H1 (cell line): ENCODE measurements at regions of chr3 and their contacts with region 1.

Region 1: GRCh38 chr3:57179580-57180410 is 14.6 kb upstream of the IL17RD start:
- DNase-seq: no peak
- H3K4me3 ChIP-seq: no peak overlapping the region
- H3K27ac ChIP-seq: no peak overlapping the region
- H3K4me1 ChIP-seq: no peaks in the 10 kb centered on the region
- H3K27me3 ChIP-seq: no peaks in the 10 kb centered on the region
- CTCF ChIP-seq: peak in 2 of 3 experiments; percentile 61 to 70; a peak in 3 of 4 replicates
- EP300 ChIP-seq: no peak
- POLR2A ChIP-seq: no peak
- RAD21 ChIP-seq: peak; percentile 82 to 86

Region 2: DNA sequence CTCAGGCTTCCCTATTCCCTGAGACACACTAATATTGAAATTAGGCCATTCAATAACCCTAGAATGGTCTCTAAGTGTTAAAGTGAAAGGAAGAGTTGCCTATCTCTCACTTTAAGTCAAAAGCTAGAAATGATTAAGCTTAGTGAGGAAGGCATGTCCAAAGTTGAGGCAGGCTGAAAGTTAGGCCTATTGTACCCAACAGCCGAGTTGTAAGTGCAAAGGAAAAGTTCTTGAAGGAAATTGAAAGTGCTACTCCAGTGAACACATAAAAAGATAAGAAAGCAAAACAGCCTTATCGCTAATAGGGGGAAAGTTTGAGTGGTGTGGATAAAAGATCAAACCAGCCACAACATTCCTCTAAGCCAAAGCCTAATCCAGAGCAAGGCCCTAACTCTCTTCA is 237.3 kb before region 1 on chr3:
- CTCF ChIA-PET with region 1: no interaction called
- POLR2A ChIA-PET with region 1: no interaction called
- DNase-seq: no peak
- H3K4me3 ChIP-seq: no peak overlapping the region
- H3K27ac ChIP-seq: no peak overlapping the region
- H3K4me1 ChIP-seq: no peaks in the 10 kb centered on the region
- H3K27me3 ChIP-seq: no peaks in the 10 kb centered on the region
- CTCF ChIP-seq: no peak
- EP300 ChIP-seq: no peak
- POLR2A ChIP-seq: no peak
- RAD21 ChIP-seq: no peak

Region 3: GRCh38 chr3:57192028-57192427 is 12.2 kb after region 1 on chr3:
- CTCF ChIA-PET with region 1: interaction called, 34 read pairs
- POLR2A ChIA-PET with region 1: no interaction called
- DNase-seq: no peak
- H3K4me3 ChIP-seq: no peak overlapping the region
- H3K27ac ChIP-seq: no peak overlapping the region
- H3K4me1 ChIP-seq: no peaks in the 10 kb centered on the region; a peak in 1 of 7 replicates
- H3K27me3 ChIP-seq: no peaks in the 10 kb centered on the region
- CTCF ChIP-seq: no peak
- EP300 ChIP-seq: no peak
- POLR2A ChIP-seq: no peak
- RAD21 ChIP-seq: no peak

Region 4: DNA sequence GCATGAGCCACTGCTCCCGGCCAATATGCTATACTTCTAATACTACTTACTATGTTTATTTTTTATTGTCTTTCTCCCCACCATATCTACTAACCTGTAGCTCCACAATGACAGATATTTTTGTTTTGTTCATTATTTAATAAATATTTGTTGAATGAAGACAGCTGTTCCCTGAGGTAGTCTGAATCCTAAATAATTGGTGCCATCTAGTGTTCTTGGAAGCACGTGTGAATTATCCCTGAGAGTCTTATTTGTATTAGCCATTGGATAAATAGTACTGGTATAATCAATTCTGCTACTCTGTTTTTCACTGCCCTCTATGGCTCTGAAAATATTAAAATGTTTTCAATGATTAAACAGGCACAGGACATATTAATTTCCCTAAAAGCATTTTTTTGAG is 42.1 kb after region 1 on chr3:
- CTCF ChIA-PET with region 1: interaction called, 45 read pairs
- POLR2A ChIA-PET with region 1: no interaction called
- DNase-seq: no peak
- H3K4me3 ChIP-seq: no peak overlapping the region
- H3K27ac ChIP-seq: no peak overlapping the region
- H3K4me1 ChIP-seq: no peaks in the 10 kb centered on the region
- H3K27me3 ChIP-seq: no peaks in the 10 kb centered on the region
- CTCF ChIP-seq: peak in 2 of 3 experiments; percentile 37 to 41; a peak in 2 of 4 replicates
- EP300 ChIP-seq: no peak
- POLR2A ChIP-seq: no peak
- RAD21 ChIP-seq: peak; percentile 78